Caco-2 (cell line): ENCODE measurements at regions of chr7 and their contacts with region 1.

Region 1: DNA sequence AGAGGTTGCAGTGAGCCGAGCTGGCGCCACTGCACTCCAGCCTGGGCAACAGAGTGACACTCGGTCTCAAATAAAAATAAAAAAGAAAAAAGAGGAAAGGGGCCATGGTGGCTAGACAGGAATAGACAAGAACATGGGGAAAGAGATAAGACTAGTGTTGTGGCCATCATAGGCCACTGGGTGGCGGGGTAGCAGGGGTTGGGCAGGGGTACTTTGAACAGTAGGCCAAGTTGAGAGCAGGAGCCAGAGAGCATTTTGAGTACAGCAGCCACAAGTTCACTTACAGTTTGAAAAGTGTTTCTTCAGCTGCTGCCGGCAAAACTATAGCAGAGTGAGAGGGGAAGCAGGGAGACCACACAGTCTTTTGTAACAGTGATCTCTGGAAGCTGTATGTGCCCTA is 656.0 kb downstream of the CNTNAP2 start:
- DNase-seq: peak; percentile 47 to 50
- H3K4me3 ChIP-seq: no peak overlapping the region
- H3K4me3 Mint-ChIP-seq: no peak overlapping the region
- H3K27ac Mint-ChIP-seq: no peak overlapping the region
- H3K4me1 ChIP-seq: no peaks in the 10 kb centered on the region
- H3K4me1 Mint-ChIP-seq: peaks cover 12% of the 10 kb centered on the region
- H3K27me3 ChIP-seq: no peaks in the 10 kb centered on the region
- H3K27me3 Mint-ChIP-seq: no peaks in the 10 kb centered on the region
- CTCF ChIP-seq: peak; percentile 36 to 39

Region 2: GRCh38 chr7:146575903-146576302 is 196.7 kb before region 1 on chr7:
- CTCF ChIA-PET with region 1: no interaction called
- POLR2A ChIA-PET with region 1: no interaction called
- intact Hi-C with region 1: no loop called
- DNase-seq: no peak
- H3K4me3 ChIP-seq: no peak overlapping the region
- H3K4me3 Mint-ChIP-seq: no peak overlapping the region
- H3K27ac Mint-ChIP-seq: no peak overlapping the region
- H3K4me1 ChIP-seq: no peaks in the 10 kb centered on the region
- H3K4me1 Mint-ChIP-seq: no peaks in the 10 kb centered on the region
- H3K27me3 ChIP-seq: no peaks in the 10 kb centered on the region
- H3K27me3 Mint-ChIP-seq: no peaks in the 10 kb centered on the region
- CTCF ChIP-seq: no peak

Region 3: GRCh38 chr7:146937836-146938235 is 165.2 kb after region 1 on chr7:
- CTCF ChIA-PET with region 1: no interaction called
- POLR2A ChIA-PET with region 1: no interaction called
- intact Hi-C with region 1: loop called (anchors 5 kb)
- DNase-seq: peak in 1 of 2 experiments; percentile 58
- H3K4me3 ChIP-seq: no peak overlapping the region
- H3K4me3 Mint-ChIP-seq: peak overlapping the region; percentile 27
- H3K27ac Mint-ChIP-seq: peak overlapping the region; percentile 61
- H3K4me1 ChIP-seq: peaks cover 39% of the 10 kb centered on the region
- H3K4me1 Mint-ChIP-seq: peaks cover 8% of the 10 kb centered on the region
- H3K27me3 ChIP-seq: no peaks in the 10 kb centered on the region
- H3K27me3 Mint-ChIP-seq: no peaks in the 10 kb centered on the region
- CTCF ChIP-seq: no peak

Region 4: DNA sequence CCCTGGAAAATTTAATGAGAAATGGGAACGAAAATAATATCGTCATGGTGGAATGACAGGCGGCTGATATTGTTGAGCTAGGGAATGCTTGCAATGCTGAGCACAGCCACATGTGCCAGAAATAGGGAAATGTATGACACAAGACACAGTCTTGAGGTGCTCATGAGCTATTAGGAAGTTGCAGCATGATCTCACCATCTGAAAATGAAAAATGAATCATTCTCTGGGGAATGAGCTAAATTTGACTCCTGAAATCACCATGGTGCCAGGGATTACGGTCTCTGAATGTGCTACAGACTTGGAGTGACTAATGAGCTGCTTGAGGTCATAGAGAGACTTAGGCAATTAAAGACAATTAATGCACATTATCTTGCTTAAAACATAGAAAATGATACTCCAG is 189.0 kb after region 1 on chr7:
- CTCF ChIA-PET with region 1: no interaction called
- POLR2A ChIA-PET with region 1: no interaction called
- intact Hi-C with region 1: loop called (anchors 1 kb)
- DNase-seq: no peak
- H3K4me3 ChIP-seq: no peak overlapping the region
- H3K4me3 Mint-ChIP-seq: no peak overlapping the region
- H3K27ac Mint-ChIP-seq: no peak overlapping the region
- H3K4me1 ChIP-seq: no peaks in the 10 kb centered on the region
- H3K4me1 Mint-ChIP-seq: no peaks in the 10 kb centered on the region
- H3K27me3 ChIP-seq: no peaks in the 10 kb centered on the region
- H3K27me3 Mint-ChIP-seq: no peaks in the 10 kb centered on the region
- CTCF ChIP-seq: no peak

Region 5: DNA sequence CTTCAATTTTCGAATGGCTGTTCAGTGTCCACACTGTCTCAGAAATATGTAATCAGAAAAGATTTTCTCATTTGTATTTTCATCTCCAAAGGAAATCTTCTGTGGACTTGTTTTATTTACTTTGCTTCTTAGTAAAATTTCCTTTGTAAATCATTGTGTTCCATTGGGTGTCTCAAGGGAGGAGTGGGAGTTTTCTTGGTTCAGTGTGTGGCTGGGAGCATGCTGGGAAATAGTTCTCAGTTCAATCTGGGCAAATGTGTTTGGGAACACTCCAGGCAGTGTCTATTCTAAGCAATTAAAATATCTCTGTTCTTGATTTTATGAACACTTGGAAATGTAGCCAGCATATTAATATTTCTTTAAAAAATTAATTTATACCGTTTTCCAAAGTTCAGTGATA is 363.8 kb after region 1 on chr7:
- CTCF ChIA-PET with region 1: no interaction called
- POLR2A ChIA-PET with region 1: no interaction called
- intact Hi-C with region 1: no loop called
- DNase-seq: no peak
- H3K4me3 ChIP-seq: no peak overlapping the region
- H3K4me3 Mint-ChIP-seq: no peak overlapping the region
- H3K27ac Mint-ChIP-seq: no peak overlapping the region
- H3K4me1 ChIP-seq: no peaks in the 10 kb centered on the region
- H3K4me1 Mint-ChIP-seq: no peaks in the 10 kb centered on the region
- H3K27me3 ChIP-seq: no peaks in the 10 kb centered on the region
- H3K27me3 Mint-ChIP-seq: no peaks in the 10 kb centered on the region
- CTCF ChIP-seq: no peak